ENCODE measurements at regions of chr7 and their contacts with region 1.

Region 1: DNA sequence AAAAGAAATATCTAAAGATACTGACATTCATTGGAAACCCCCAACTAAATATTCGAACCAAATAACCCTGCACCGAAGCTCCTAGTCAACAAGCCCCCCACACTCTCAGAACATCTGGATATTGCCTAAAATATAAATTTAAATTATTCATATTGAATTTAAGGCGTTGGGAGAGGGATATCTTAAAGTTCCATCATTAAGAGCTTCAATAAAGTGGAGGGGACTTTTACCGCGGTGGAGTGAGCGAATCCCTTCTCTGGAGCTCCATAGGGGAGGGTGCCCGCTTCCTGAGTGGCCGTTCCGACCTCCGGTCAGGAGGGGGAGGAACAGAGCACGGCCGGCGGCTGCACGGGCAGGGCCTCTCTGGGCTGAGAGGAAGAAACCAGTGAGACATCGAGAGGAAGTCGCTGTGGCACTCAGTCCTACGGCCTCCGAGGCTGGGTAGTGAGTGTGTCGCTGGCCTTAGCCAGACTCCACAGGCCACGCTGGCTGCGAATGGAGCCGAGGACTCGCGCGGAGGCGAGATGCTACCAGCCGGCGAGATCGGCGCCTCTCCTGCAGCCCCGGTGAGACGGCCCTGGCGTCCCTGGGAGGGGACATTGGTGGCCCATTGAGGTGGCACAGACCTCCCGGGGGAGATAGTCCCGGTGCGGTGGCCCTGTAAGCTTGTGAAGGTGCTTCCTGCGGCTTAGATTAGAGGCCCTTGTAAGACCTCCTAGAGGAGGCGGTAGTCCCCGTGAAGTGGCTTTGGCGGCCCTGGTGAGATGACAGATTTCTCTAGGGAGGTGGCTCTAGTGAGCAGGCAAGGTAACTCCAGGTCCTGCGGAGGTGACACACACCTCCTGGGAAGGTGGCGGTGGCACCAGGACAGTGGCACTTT is at the start of gene RINT1:
- DNase-seq: peak; percentile 70 to 98
- H3K4me3 ChIP-seq: peak within 1 kb of the TSS; percentile 86 to 99 (median 96)
- H3K27ac ChIP-seq: no peak within 1 kb of the TSS
- H3K4me1 ChIP-seq: peaks cover 0 to 4% (median 0%) of the 10 kb centered on the region in 4 experiments; a peak in 2 of 7 replicates
- H3K27me3 ChIP-seq: no peaks in the 10 kb centered on the region
- CTCF ChIP-seq: peak; percentile 74 to 83 (median 82)
- EP300 ChIP-seq: no peak
- POLR2A ChIP-seq: peak; percentile 86 to 97
- RAD21 ChIP-seq: peak in 1 of 2 experiments; percentile 23; a peak in 1 of 4 replicates
- total RNA-seq, gene RINT1: 18.6 and 21.8 TPM in 2 replicates

Region 2: GRCh38 chr7:105423987-105424386 is 108.0 kb before region 1 on chr7:
- CTCF ChIA-PET with region 1: no interaction called
- POLR2A ChIA-PET with region 1: no interaction called
- DNase-seq: no peak
- H3K4me3 ChIP-seq: no peak overlapping the region
- H3K27ac ChIP-seq: no peak overlapping the region
- H3K4me1 ChIP-seq: no peaks in the 10 kb centered on the region
- H3K27me3 ChIP-seq: no peaks in the 10 kb centered on the region
- CTCF ChIP-seq: no peak
- EP300 ChIP-seq: no peak
- POLR2A ChIP-seq: no peak
- RAD21 ChIP-seq: no peak

Region 3: DNA sequence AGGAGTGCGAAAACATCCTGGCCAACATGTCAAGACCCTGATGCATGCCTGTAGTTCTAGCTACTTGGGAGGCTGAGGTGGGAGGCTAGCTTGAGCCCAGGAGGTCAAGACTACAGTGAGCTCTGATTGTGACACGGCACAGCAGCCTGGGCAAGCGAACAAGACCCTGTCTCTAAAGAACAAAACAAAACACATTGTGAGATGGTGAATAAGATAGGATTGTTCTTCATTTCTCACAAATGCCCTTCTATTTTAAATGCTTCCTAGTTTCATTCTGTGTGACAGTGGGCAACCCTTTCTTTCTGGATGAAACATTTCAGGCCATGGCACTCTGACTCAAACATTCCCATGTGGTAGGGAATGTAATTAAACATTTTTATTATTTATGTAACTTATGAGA is 35.8 kb after region 1 on chr7:
- CTCF ChIA-PET with region 1: interaction called, 12 read pairs
- POLR2A ChIA-PET with region 1: interaction called, 4 read pairs
- DNase-seq: no peak
- H3K4me3 ChIP-seq: no peak overlapping the region
- H3K27ac ChIP-seq: no peak overlapping the region
- H3K4me1 ChIP-seq: no peaks in the 10 kb centered on the region
- H3K27me3 ChIP-seq: peaks cover 0 to 1% (median 0%) of the 10 kb centered on the region in 4 experiments; a peak in 1 of 7 replicates
- CTCF ChIP-seq: no peak
- EP300 ChIP-seq: no peak
- POLR2A ChIP-seq: no peak
- RAD21 ChIP-seq: no peak

Region 4: DNA sequence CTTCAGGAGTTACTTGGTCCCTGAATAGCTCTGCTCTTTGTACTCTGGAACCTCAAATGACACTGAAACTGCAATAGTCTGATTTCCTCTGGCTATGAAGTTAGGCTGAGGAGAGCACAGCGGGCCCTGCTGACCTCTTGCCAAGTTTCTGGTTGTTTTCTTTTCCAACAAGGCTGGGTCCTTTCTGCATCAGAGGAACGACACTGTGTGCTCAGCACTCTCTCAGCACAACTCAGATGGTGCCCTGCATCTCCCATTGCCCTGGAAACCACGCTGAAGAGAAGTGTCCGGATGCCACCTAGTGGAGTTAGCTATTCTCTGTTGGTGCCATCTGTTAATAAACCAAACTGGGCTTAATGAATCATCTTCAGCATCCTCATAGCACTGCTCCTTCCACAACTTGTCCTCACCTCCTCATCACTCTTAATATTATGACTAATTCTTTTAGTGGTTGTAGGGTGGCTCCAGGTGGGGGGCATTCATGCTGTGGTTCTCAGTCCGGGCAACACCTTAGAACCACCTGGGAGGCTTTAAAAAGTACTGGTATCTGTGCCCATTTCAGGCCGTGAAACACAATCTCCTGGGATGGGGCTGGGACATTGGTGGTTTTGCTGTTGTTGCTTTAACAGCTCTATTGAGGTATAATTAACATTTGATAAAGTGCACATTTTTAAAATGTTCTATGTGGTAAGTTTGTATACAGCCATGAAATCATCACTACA is 57.5 kb after region 1 on chr7:
- CTCF ChIA-PET with region 1: interaction called, 13 read pairs
- POLR2A ChIA-PET with region 1: interaction called, 3 read pairs
- DNase-seq: no peak
- H3K4me3 ChIP-seq: no peak overlapping the region
- H3K27ac ChIP-seq: no peak overlapping the region
- H3K4me1 ChIP-seq: peaks cover 0 to 2% (median 0%) of the 10 kb centered on the region in 4 experiments; a peak in 1 of 7 replicates
- H3K27me3 ChIP-seq: no peaks in the 10 kb centered on the region
- CTCF ChIP-seq: peak; percentile 51 to 91 (median 77)
- EP300 ChIP-seq: no peak
- POLR2A ChIP-seq: no peak
- RAD21 ChIP-seq: peak; percentile 93 to 95

Region 5: DNA sequence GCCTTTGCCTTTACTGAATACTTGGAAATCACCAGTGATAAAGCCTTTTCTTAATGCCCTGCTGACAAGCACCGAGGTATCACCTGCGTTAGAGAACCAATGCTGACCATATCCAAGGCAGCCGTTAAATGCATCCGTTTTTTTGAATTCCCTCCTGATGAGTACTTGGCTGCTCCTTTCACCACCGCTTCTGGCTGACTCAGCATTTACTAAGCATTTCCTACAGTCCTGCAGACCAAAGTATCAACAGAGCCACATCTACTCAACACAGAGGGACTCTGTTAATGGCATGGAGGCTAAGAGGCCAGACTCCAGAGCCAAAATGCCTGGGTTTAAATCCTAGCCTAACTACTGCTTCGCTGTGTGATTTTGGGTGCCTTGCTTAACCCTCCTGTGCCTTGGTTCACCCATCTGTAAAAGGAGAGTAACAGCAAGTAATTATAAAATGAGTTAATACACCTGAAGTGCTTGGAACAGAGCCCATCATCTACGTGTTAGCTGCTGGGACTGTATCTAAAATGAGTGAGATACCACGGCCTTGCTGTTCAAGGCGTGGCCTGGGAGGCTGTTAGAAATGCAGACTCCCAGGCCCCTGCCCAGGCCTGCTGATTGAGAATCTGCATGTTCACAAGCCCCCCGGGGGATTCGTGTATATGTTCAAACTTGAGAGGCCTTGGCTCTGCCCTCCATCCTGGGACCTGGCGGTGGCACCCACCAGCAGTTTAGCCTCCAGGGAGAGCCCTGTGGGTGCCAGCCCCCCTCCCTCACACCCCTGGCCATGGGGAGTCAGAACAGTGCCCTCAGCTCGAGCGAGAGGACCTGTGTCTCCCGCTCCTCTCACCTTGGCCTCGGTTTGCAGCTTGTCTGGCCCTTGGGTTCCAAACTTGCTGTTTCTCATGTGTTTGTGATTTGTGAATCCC is 80.1 kb after region 1 on chr7:
- CTCF ChIA-PET with region 1: no interaction called
- POLR2A ChIA-PET with region 1: no interaction called
- DNase-seq: no peak
- H3K4me3 ChIP-seq: no peak overlapping the region
- H3K27ac ChIP-seq: no peak overlapping the region; the same call in 1 of the 2 replicates
- H3K4me1 ChIP-seq: peaks cover 0 to 2% (median 0%) of the 10 kb centered on the region in 4 experiments; a peak in 2 of 7 replicates
- H3K27me3 ChIP-seq: no peaks in the 10 kb centered on the region
- CTCF ChIP-seq: no peak
- EP300 ChIP-seq: no peak
- POLR2A ChIP-seq: 0 out of 3 replicates have a peak, but pooled peaks of 1 of the 2 experiments have one; percentile 5
- RAD21 ChIP-seq: no peak

Region 6: DNA sequence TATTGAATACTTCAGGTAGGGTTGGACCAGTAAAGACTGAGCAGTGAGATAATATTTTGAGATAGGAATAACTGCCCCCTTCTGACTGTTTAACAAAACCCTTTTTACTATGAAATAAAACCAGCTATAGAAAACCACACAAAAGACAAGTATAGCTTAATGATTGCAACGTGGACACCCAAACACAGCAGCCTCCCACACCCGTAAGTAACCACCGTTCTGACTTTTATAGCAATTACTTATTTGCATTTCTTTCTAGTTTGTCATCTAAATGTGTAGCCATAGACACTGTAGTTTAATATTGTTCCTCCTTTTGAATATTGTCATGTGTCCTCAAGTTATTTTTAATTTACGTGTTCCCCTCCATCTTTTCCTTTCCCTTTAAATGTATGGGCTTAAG is 623.0 kb after region 1 on chr7:
- CTCF ChIA-PET with region 1: no interaction called
- POLR2A ChIA-PET with region 1: no interaction called
- DNase-seq: no peak
- H3K4me3 ChIP-seq: no peak overlapping the region
- H3K27ac ChIP-seq: no peak overlapping the region
- H3K4me1 ChIP-seq: no peaks in the 10 kb centered on the region; a peak in 1 of 7 replicates
- H3K27me3 ChIP-seq: no peaks in the 10 kb centered on the region
- CTCF ChIP-seq: no peak
- EP300 ChIP-seq: no peak
- POLR2A ChIP-seq: no peak
- RAD21 ChIP-seq: no peak